ENCODE measurements at regions of chr12 and their contacts with region 1.

Region 1: GRCh38 chr12:95848575-95849388 is 10.0 kb upstream of the SNRPF start:
- DNase-seq: peak; percentile 23
- H3K4me3 ChIP-seq: no peak overlapping the region
- H3K27ac ChIP-seq: no peak overlapping the region
- H3K4me1 ChIP-seq: no peaks in the 10 kb centered on the region
- H3K27me3 ChIP-seq: peaks cover 3% of the 10 kb centered on the region
- CTCF ChIP-seq: peak; percentile 21 to 41

Region 2: GRCh38 chr12:95909871-95910270 is 61.1 kb after region 1 on chr12:
- CTCF ChIA-PET with region 1: no interaction called
- dilution Hi-C with region 1: loop called (anchors 5 kb)
- in situ Hi-C with region 1: no loop called
- intact Hi-C with region 1: no loop called
- DNase-seq: no peak
- H3K4me3 ChIP-seq: no peak overlapping the region
- H3K27ac ChIP-seq: no peak overlapping the region
- H3K4me1 ChIP-seq: no peaks in the 10 kb centered on the region
- H3K27me3 ChIP-seq: no peaks in the 10 kb centered on the region
- CTCF ChIP-seq: no peak